Activated CD8-positive, alpha-beta T cell treated with anti-CD3 and anti-CD28 coated beads, Interleukin-2, amount 10 ng/mL, durations not matched to agents 7 days and 5 days (primary cell): ENCODE measurements at regions of chr6 and their contacts with region 1.

Region 1: DNA sequence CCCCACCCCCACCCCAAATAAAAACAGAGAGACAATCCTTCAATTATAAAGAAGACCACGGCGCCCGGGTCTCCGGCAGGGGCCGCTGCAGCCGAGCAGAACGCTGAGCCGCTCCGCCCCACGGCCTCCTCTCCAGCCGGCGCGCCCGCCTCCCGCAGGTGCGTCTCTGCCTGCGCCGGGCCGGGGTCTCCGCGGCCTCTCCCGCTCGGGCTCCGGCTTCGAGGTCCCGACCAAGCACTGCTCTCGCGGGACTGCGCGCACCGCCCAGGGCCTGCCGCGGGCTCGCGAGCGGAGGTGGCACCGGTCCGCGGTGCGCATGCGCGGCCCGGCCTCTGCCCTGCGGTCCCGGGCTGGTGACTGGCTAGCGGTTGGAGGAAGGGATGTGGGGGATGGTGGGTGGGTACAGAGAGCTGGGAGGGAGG is 241 bp upstream of the SIRT5 start:
- DNase-seq: peak; percentile 94
- ATAC-seq: peak; percentile 81
- H3K4me3 Mint-ChIP-seq: peak overlapping the region; percentile 93
- H3K27ac Mint-ChIP-seq: peak overlapping the region; percentile 98
- H3K4me1 Mint-ChIP-seq: peaks cover 20% of the 10 kb centered on the region
- H3K27me3 Mint-ChIP-seq: peaks cover 2% of the 10 kb centered on the region

Region 2: GRCh38 chr6:13120483-13121482 is 453.4 kb before region 1 on chr6:
- CTCF ChIA-PET with region 1: no interaction called
- POLR2A ChIA-PET with region 1: no interaction called
- DNase-seq: no peak
- ATAC-seq: no peak
- H3K4me3 Mint-ChIP-seq: no peak overlapping the region
- H3K27ac Mint-ChIP-seq: no peak overlapping the region
- H3K4me1 Mint-ChIP-seq: no peaks in the 10 kb centered on the region
- H3K27me3 Mint-ChIP-seq: peaks cover 5% of the 10 kb centered on the region

Region 3: DNA sequence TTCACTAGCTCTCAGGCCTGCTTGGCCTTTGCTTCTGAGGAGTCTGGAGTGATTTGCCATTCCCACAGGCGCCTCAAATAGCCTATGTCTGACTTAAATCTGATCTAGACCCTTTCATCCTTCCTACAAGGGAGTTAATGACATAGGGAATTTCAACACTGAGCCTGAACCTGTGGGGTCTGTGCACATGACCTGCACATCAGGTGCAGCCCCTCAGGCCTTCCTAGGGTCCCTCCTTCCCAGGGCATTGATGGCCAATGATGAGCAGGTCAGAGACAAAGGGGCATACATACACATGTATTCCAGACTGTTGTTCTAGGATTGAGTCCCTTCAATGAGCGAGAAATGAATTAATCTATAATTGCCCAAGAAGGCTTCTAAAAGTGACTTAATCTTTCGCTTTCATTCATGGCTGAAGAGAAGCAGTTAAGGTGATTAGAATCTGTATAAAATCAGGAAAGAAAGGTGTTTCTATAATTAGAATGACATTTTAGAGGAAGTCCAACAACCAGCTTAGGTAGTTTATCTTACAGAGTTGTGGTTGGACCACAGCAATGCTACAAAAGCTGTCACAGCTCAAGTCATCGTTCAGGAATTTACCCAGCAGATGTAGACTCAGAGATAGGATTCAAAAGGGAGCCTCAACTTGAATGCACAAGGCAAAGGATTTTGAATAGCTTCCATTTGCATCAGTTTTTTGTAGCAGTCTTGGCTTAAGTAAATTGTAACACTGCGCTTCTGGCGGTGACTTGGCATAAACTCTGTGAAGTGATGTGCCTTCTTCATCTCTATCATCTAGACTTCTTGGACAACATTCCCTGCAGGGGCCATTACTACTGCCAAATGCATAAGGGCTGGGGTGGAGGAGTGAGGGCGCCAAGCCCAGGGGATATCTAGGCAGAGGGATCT is 218.9 kb before region 1 on chr6:
- CTCF ChIA-PET with region 1: interaction called, 19 read pairs
- POLR2A ChIA-PET with region 1: interaction called, 8 read pairs
- DNase-seq: peak; percentile 57
- ATAC-seq: peak; percentile 65
- H3K4me3 Mint-ChIP-seq: peak overlapping the region; percentile 68
- H3K27ac Mint-ChIP-seq: peak overlapping the region; percentile 97
- H3K4me1 Mint-ChIP-seq: peaks cover 55% of the 10 kb centered on the region
- H3K27me3 Mint-ChIP-seq: no peaks in the 10 kb centered on the region

Region 4: GRCh38 chr6:13454286-13455221 is 119.6 kb before region 1 on chr6:
- CTCF ChIA-PET with region 1: interaction called, 26 read pairs
- POLR2A ChIA-PET with region 1: interaction called, 5 read pairs
- DNase-seq: peak; percentile 70
- ATAC-seq: peak; percentile 81
- H3K4me3 Mint-ChIP-seq: peak overlapping the region; percentile 63
- H3K27ac Mint-ChIP-seq: peak overlapping the region; percentile 96
- H3K4me1 Mint-ChIP-seq: peaks cover 61% of the 10 kb centered on the region
- H3K27me3 Mint-ChIP-seq: no peaks in the 10 kb centered on the region

Region 5: DNA sequence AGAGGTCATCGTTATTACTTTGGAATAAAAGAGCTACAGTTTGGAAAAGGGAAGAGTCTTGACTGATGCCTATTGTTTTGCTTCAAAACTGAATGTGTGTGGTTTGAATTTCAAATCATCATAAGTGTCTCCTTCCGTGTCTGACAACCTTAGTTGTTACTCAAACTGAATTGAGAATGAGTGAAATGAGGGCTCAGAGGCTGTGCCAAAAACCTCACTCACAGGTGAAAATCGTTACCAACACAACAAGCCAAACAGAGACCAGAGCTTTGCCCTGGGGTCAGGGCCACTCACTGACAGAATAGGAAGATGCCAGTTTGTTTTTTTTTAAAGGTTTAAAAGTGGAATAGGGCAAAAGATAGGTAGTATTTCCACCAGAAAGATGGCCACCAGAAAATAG is 14.9 kb before region 1 on chr6:
- CTCF ChIA-PET with region 1: interaction called, 57 read pairs
- POLR2A ChIA-PET with region 1: interaction called, 3 read pairs
- DNase-seq: no peak
- ATAC-seq: no peak
- H3K4me3 Mint-ChIP-seq: no peak overlapping the region
- H3K27ac Mint-ChIP-seq: no peak overlapping the region
- H3K4me1 Mint-ChIP-seq: no peaks in the 10 kb centered on the region
- H3K27me3 Mint-ChIP-seq: peaks cover 12% of the 10 kb centered on the region

Region 6: GRCh38 chr6:13624871-13625288 is 50.7 kb after region 1 on chr6:
- CTCF ChIA-PET with region 1: interaction called, 12 read pairs
- POLR2A ChIA-PET with region 1: no interaction called
- DNase-seq: peak; percentile 48
- ATAC-seq: peak; percentile 77
- H3K4me3 Mint-ChIP-seq: no peak overlapping the region
- H3K27ac Mint-ChIP-seq: peak overlapping the region; percentile 62
- H3K4me1 Mint-ChIP-seq: peaks cover 2% of the 10 kb centered on the region
- H3K27me3 Mint-ChIP-seq: no peaks in the 10 kb centered on the region